K562 (cell line): ENCODE measurements at regions of chr1 and their contacts with region 1.

Region 1: GRCh38 chr1:33735621-33736020 is 128.3 kb upstream of the HMGB4 start:
- DNase-seq: no peak
- ATAC-seq: no peak
- H3K4me3 ChIP-seq: no peak overlapping the region
- H3K27ac ChIP-seq: no peak overlapping the region
- H3K4me1 ChIP-seq: no peaks in the 10 kb centered on the region
- H3K27me3 ChIP-seq: peaks cover 0 to 9% of the 10 kb centered on the region in 2 experiments; a peak in 2 of 5 replicates
- CTCF ChIP-seq: peak in 2 of 3 experiments; percentile 17 to 38; a peak in 2 of 6 replicates
- EP300 ChIP-seq: no peak
- POLR2A ChIP-seq: no peak
- RAD21 ChIP-seq: peak in 1 of 2 experiments; percentile 34; a peak in 1 of 4 replicates

Region 2: GRCh38 chr1:33616773-33617172 is 118.8 kb before region 1 on chr1:
- CTCF ChIA-PET with region 1: no interaction called
- POLR2A ChIA-PET with region 1: no interaction called
- in situ Hi-C with region 1: no loop called
- intact Hi-C with region 1: no loop called
- DNase-seq: peak in 1 of 4 experiments; percentile 23
- ATAC-seq: no peak
- H3K4me3 ChIP-seq: no peak overlapping the region
- H3K27ac ChIP-seq: no peak overlapping the region
- H3K4me1 ChIP-seq: no peaks in the 10 kb centered on the region
- H3K27me3 ChIP-seq: peaks cover 5 to 37% of the 10 kb centered on the region in 2 experiments
- CTCF ChIP-seq: no peak
- EP300 ChIP-seq: no peak
- POLR2A ChIP-seq: no peak
- RAD21 ChIP-seq: no peak

Region 3: GRCh38 chr1:34013958-34014737 is 278.5 kb after region 1 on chr1:
- CTCF ChIA-PET with region 1: no interaction called
- POLR2A ChIA-PET with region 1: no interaction called
- in situ Hi-C with region 1: no loop called
- intact Hi-C with region 1: loop called (anchors 5 kb)
- DNase-seq: peak; percentile 33 to 43 (median 36)
- ATAC-seq: peak; percentile 84
- H3K4me3 ChIP-seq: no peak overlapping the region
- H3K27ac ChIP-seq: no peak overlapping the region
- H3K4me1 ChIP-seq: no peaks in the 10 kb centered on the region
- H3K27me3 ChIP-seq: 0 out of 5 replicates have a peak, but pooled peaks cover 0 to 3% of the 10 kb centered on the region in 2 experiments
- CTCF ChIP-seq: peak; percentile 59 to 82 (median 60)
- EP300 ChIP-seq: no peak
- POLR2A ChIP-seq: no peak
- RAD21 ChIP-seq: peak; percentile 25 to 42; a peak in 3 of 4 replicates